Activated T-helper 2 cell treated with anti-CD3 and anti-CD28 coated beads, Interferon-gamma antibody, Interleukin-2, Interleukin-4, amounts not matched to agents 10 μg/mL and 5 μg/mL and 100 μg/mL, durations not matched to agents 14 hours and 24 hours and 36 hours (primary cell): ENCODE measurements at regions of chr2 and their contacts with region 1.

Region 1: DNA sequence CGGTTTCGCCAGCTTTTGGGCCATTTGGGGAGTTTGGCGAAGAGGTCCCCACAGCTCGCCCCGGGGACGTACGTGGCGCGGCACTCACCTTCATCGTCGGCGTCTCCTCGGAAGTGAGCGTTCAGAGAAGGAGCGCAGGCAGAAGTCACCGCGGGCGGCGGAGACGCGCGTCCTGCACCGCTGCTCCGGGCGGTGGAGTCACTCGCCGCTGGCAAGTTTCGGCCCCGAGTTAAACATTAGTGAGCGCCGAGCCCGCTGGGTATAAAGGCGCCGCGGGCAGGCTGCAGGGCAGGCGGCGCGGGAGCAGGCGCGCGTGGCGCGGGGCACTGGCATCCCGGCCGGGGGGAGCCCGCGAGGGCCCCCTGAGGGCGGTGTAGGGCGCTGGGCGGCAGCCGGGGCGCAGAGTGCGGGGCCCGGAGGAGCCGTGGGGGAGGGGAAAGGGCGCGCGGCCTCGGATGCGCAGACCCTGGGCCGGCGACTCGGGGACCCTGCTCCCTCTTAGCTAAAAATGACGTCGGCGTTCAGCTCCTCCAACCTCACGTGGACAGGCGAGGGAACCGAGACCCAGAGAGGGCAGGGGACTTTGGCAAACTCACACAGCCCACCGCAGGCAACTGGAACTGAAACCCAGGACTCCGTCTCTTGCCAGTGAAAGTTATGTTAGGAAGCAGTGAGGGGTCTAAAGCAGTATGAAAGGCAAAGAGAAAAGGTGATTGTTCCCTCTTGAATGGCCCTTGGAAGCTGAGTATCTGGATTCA is at the start of gene DPP4:
- DNase-seq: peak; percentile 46
- H3K4me3 Mint-ChIP-seq: peak within 1 kb of the TSS; percentile 87
- H3K27ac Mint-ChIP-seq: peak within 1 kb of the TSS; percentile 74
- H3K4me1 Mint-ChIP-seq: peaks cover 48% of the 10 kb centered on the region
- H3K27me3 Mint-ChIP-seq: no peaks in the 10 kb centered on the region
- total RNA-seq, gene DPP4: 65.8 and 67.0 TPM in 2 replicates

Region 2: GRCh38 chr2:162013514-162014475 is 60.3 kb before region 1 on chr2:
- intact Hi-C with region 1: loop called (anchors 1 kb)
- DNase-seq: no peak
- H3K4me3 Mint-ChIP-seq: peak overlapping the region; percentile 79
- H3K27ac Mint-ChIP-seq: peak overlapping the region; percentile 87
- H3K4me1 Mint-ChIP-seq: peaks cover 67% of the 10 kb centered on the region
- H3K27me3 Mint-ChIP-seq: no peaks in the 10 kb centered on the region

Region 3: GRCh38 chr2:162025121-162026031 is 48.7 kb before region 1 on chr2:
- intact Hi-C with region 1: loop called (anchors 1 kb)
- DNase-seq: no peak
- H3K4me3 Mint-ChIP-seq: no peak overlapping the region
- H3K27ac Mint-ChIP-seq: peak overlapping the region; percentile 31
- H3K4me1 Mint-ChIP-seq: peaks cover 48% of the 10 kb centered on the region
- H3K27me3 Mint-ChIP-seq: no peaks in the 10 kb centered on the region